Heart right ventricle (tissue), 16 donors: ENCODE measurements at regions of chr7 and their contacts with region 1.

Region 1: DNA sequence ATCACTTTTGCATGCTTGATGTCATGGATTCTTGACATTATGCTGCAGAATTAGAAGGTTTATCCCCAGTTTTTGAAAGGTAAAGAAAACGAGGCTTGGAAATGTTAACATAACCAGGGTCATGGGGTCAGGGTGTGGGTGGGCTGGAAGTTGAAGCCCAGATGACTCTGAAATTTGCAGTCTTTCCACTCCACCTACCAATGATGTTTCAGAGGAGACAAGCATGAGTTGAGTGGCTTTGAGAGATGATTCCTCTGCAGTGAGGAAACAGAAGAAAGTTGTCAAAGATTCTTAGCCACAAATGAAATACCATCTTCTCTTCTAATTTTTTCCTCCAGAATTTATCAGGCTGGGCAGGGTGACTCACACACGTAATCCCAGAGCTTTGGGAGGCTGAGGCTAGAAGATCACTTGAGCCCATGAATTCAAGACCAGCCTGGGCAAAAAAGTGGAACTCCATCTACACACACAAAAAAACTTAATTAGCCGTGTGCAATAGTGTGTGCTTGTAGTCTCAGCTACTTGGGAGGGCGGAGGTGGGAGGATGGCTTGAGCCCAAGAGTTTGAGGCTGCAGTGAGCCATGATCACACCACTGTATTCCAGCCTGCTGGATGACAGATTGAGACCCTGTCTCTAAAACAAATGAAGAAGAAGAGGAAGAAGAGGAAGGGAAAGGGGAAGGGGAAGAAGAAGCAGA is 239.1 kb upstream of the AUTS2 start:
- DNase-seq: no peak
- ATAC-seq: peak in 2 of 8 donors; percentile 61 to 66
- H3K4me3 ChIP-seq: no peak overlapping the region
- H3K27ac ChIP-seq: no peak overlapping the region
- H3K4me1 ChIP-seq: peaks cover 0 to 14% (median 5%) of the 10 kb centered on the region in 9 donors
- H3K27me3 ChIP-seq: no peaks in the 10 kb centered on the region
- CTCF ChIP-seq: no peak

Region 2: GRCh38 chr7:69246758-69247157 is 112.4 kb before region 1 on chr7:
- intact Hi-C with region 1: loop called in 1 of 10 experiments (anchors 10 kb)
- DNase-seq: peak in 1 of 2 donors; percentile 12
- ATAC-seq: peak in 6 of 8 donors; percentile 43 to 77 (median 62)
- H3K4me3 ChIP-seq: no peak overlapping the region
- H3K27ac ChIP-seq: no peak overlapping the region
- H3K4me1 ChIP-seq: no peaks in the 10 kb centered on the region
- H3K27me3 ChIP-seq: no peaks in the 10 kb centered on the region
- CTCF ChIP-seq: no peak